ENCODE measurements at regions of chr3 and their contacts with region 1.

Region 1: DNA sequence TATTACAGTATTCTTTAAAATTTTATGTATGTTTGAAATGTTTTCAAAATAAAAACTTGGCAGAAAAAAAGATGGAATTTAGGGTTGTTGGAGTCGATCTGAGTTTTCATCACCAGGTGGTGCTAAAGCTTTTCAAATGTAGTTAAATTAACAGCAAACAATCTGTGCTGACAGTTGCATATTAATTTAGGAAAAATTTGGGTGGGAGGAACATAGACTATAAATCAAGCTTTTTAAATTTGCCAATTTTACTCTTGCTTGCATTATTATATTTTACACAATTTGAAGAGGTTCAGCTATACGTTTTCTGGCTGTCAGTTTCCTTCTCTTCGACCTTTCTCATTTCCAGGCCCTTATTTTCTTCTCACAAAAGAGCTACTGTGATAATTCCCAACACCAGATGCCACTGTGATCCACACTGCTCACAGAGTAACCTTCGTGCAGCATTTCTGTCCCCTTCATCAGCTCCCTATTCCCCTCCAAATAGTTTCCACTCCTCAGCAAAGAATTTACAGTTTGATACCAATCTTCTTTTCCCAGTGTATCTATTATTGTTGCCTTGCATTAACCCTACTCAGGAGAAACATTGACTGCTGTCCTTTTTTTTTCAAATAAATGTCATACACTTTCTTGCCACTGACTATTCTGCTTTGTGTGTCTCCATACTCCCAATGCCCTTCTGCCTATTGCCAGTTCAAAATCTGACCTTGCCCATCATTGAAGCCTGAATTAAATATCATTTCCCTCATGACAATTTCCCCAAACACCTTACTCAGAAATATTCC is 53.4 kb upstream of the EIF5A2 start:
- DNase-seq: peak in 1 of 2 donors; percentile 67
- H3K4me3 ChIP-seq: no peak overlapping the region
- H3K27ac ChIP-seq: no peak overlapping the region
- H3K4me1 ChIP-seq: no peaks in the 10 kb centered on the region
- H3K27me3 ChIP-seq: no peaks in the 10 kb centered on the region
- CTCF ChIP-seq: peak in 5 of 7 experiments; percentile 38 to 50 (median 46)
- EP300 ChIP-seq: no peak
- POLR2A ChIP-seq: no peak

Region 2: DNA sequence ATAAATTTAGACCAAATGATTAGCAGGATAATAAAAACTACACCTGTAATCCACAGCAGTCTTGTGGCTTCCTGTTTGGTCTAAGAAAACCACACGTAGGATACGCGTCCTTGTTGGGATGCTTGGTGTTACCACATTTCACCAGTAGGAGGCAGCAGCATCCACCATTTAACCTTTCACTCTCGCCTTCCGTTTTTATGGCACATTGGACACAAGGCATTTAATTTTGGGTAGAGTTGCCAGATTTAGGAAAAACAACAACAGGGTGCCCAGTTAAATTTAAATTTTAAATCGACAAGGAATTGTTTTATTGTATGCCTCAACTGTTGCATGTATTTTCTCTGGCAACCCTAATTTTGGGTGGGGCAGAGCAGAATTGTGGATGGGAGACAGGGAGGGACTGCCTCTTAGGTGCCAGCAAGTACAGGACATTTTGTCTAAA is 1098.3 kb before region 1 on chr3:
- intact Hi-C with region 1: no loop called
- DNase-seq: peak; percentile 84 to 91
- H3K4me3 ChIP-seq: no peak overlapping the region
- H3K27ac ChIP-seq: no peak overlapping the region
- H3K4me1 ChIP-seq: peaks cover 5 to 21% (median 8%) of the 10 kb centered on the region in 4 donors
- H3K27me3 ChIP-seq: peaks cover 0 to 7% (median 0%) of the 10 kb centered on the region in 3 donors
- CTCF ChIP-seq: peak in 6 of 7 experiments; percentile 59 to 95 (median 92)
- EP300 ChIP-seq: no peak
- POLR2A ChIP-seq: no peak

Region 3: DNA sequence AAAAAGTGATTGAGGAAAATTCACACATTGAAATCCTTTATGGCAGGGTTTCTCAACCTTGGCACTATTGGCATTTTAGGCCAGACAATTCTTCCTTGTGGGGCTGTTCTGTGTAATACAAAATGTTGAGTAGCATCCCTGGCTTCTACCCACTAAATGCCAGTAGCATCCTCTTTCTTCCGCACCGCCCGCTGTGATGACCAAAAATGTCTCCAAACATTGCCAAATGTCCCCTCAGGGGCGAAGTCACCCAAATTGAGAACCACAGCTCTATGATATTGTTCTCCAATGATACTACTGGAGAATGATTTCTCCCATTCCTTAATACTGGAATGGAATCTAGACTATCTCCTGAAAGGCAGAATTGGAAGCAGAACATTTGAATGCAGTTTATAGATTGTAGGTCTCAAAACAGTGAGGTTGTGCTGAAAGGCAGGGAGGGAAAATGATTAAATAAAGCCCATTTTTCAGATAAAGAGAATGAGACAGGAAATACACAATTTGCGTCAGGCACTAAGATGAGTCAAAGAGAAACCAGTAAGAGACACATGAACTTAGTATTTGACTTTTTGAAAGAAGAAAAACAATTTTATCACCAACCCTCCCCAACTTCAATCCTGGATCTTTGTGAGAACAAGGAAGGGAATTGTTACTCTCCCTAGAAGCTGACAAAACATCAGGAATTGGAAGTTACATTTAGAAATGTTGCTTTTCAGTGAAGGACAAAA is 600.0 kb after region 1 on chr3:
- intact Hi-C with region 1: loop called (anchors 5 kb)
- DNase-seq: no peak
- H3K4me3 ChIP-seq: no peak overlapping the region
- H3K27ac ChIP-seq: no peak overlapping the region
- H3K4me1 ChIP-seq: peaks cover 0 to 10% (median 0%) of the 10 kb centered on the region in 4 donors
- H3K27me3 ChIP-seq: no peaks in the 10 kb centered on the region
- CTCF ChIP-seq: no peak
- EP300 ChIP-seq: no peak
- POLR2A ChIP-seq: no peak